OCI-LY7 (cell line): ENCODE measurements at regions of chrX and their contacts with region 1.

Region 1: DNA sequence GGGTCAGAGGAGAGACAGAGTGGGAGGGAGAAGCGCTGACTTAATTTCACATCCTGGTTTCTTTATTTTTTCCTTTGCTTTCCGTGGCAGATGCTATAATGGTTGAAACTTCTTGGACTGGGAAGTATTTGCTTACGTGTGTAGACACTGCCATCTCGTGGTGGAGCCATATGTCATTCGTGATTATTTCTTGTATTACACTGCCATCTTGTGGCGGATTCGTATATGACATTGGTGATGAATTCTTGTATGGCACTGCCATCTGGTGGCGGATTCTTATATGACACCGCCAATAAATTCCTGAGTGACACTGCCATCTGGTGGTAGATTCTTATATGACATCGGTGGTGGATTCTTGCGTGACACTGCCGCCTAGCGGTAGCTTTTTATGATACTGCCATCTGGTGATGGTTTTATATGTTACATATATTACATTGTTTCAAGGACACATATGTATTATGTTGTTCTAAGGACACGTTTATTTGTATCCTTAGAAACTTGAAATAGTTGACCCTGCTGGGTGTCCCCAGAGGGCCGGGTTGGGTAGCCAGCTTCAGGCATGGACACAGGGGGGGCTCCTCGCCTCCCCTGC is 37.3 kb upstream of the CLCN4 start:
- DNase-seq: peak; percentile 82
- H3K4me3 ChIP-seq: no peak overlapping the region
- H3K27ac ChIP-seq: no peak overlapping the region
- H3K4me1 ChIP-seq: peaks cover 79% of the 10 kb centered on the region
- CTCF ChIP-seq: peak; percentile 100; the same call in 1 of the 2 replicates

Region 2: DNA sequence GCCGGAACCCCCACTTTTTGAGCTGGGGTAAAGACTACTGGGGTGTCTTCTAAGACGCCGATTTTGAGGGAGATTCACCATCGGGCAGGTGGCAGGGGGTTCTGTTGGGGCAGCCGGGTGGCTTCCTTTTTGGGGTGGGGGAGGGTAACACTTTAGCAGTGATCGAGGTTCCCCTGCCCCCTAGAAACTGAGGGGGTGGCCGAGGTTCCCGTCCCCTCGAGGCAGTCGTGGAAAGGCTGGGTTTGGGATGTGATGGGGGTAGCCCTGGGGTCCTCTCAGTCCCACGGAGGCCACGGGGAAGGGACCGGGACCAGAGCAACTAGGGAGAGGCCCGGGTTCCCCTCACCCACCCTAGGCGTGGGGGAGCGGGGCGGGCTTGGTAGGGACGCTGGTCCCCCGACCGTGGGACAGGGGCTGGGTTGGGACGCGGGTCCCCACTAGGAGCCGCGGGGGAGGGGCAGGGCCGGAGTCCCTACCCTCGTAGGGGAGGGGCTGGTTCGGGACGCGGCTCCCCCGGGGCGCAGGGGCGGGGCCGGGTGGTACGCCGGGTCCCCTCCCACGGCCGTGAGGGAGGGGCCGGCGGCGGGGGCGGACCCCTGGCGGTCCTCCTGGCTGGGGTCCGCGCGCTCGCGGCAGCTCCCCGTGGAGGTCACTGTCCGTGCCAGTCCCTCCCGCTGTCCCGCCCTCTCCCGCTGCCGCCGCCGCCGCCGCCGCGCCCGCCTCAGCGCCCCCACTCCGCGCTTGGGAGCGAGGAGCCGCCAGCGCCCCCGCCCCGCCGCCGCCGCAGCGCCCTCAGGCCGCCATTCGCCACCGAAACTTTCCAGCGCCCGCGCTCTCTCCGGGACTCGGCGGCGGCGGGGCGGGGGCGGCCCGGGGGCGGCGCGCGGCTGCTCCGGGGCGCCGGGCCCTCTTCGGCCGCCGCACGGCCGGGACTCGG is 654.8 kb before region 1 on chrX and contains the start of gene TBL1X:
- CTCF ChIA-PET with region 1: no interaction called
- POLR2A ChIA-PET with region 1: no interaction called
- intact Hi-C with region 1: loop called (anchors 5 kb)
- DNase-seq: peak; percentile 71
- H3K4me3 ChIP-seq: peak within 1 kb of the TSS; percentile 84
- H3K27ac ChIP-seq: peak within 1 kb of the TSS; percentile 89
- H3K4me1 ChIP-seq: peaks cover 32% of the 10 kb centered on the region
- CTCF ChIP-seq: no peak
- total RNA-seq, gene TBL1X: 10.6 and 16.1 TPM in 2 replicates

Region 3: DNA sequence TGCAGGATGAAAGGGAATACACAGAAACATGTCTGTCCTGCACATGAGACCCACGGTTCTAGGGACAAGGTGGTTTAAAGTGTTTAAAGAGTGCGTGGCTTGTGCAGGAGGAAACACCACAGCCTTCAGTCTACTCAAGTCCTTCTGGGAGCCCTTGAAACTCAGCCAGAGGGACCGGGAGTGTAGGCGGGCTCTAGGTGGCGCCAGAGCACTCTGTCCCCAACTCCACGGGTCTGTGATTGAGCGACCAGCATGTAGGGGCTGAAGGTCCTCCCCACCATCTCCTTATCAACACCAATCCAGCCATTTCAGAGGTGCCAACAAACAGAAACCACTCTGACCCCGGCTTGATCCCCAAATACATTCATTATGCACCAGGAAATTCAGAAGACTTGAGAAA is 234.3 kb before region 1 on chrX:
- CTCF ChIA-PET with region 1: no interaction called
- POLR2A ChIA-PET with region 1: no interaction called
- intact Hi-C with region 1: loop called (anchors 1 kb)
- DNase-seq: peak; percentile 44
- H3K4me3 ChIP-seq: no peak overlapping the region
- H3K27ac ChIP-seq: no peak overlapping the region
- H3K4me1 ChIP-seq: no peaks in the 10 kb centered on the region
- CTCF ChIP-seq: peak; percentile 77

Region 4: GRCh38 chrX:10014462-10015356 is 104.8 kb before region 1 on chrX:
- CTCF ChIA-PET with region 1: no interaction called
- POLR2A ChIA-PET with region 1: interaction called, 4 read pairs
- intact Hi-C with region 1: loop called (anchors 2 kb)
- DNase-seq: peak; percentile 77
- H3K4me3 ChIP-seq: peak overlapping the region; percentile 71
- H3K27ac ChIP-seq: no peak overlapping the region
- H3K4me1 ChIP-seq: peaks cover 42% of the 10 kb centered on the region
- CTCF ChIP-seq: no peak

Region 5: GRCh38 chrX:10156199-10157031 is 36.9 kb after region 1 on chrX and contains the start of gene CLCN4:
- CTCF ChIA-PET with region 1: no interaction called
- POLR2A ChIA-PET with region 1: interaction called, 4 read pairs
- intact Hi-C with region 1: loop called (anchors 2 kb)
- DNase-seq: peak; percentile 65
- H3K4me3 ChIP-seq: peak within 1 kb of the TSS; percentile 74
- H3K27ac ChIP-seq: peak within 1 kb of the TSS; percentile 86
- H3K4me1 ChIP-seq: peaks cover 32% of the 10 kb centered on the region
- CTCF ChIP-seq: no peak
- total RNA-seq, gene CLCN4: 7.8 and 11.1 TPM in 2 replicates